CD4-positive, alpha-beta T cell (primary cell): ENCODE measurements at regions of chr6 and their contacts with region 1.

Region 1: DNA sequence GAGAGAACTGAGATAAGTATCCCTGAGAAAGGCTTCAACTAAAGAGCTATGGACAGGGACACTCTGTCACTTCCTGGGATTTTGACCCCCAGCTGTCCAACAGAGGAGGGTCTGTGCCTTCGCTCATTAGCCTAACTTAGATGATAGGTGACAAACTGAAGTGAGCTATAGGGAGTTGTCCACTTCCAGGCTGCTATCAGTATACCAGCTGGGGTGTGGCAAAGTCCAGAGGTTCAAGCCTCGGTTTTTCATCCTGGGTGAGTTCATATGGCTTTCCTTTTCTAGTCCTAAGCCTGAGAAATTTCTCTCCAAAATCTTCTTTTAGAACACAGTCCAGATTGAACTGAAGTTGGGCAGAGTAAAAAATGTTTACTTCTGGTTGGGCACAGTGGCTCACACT is 5.9 kb upstream of the PAQR8 start:
- DNase-seq: no peak
- ATAC-seq: no peak
- H3K4me3 ChIP-seq: no peak overlapping the region
- H3K4me3 Mint-ChIP-seq: no peak overlapping the region
- H3K27ac ChIP-seq: no peak overlapping the region
- H3K27ac Mint-ChIP-seq: no peak overlapping the region
- H3K4me1 ChIP-seq: peaks cover 7% of the 10 kb centered on the region
- H3K4me1 Mint-ChIP-seq: peaks cover 18% of the 10 kb centered on the region
- H3K27me3 ChIP-seq: no peaks in the 10 kb centered on the region
- H3K27me3 Mint-ChIP-seq: no peaks in the 10 kb centered on the region
- CTCF ChIP-seq: no peak

Region 2: GRCh38 chr6:52108128-52108527 is 247.9 kb before region 1 on chr6:
- CTCF ChIA-PET with region 1: no interaction called
- POLR2A ChIA-PET with region 1: no interaction called
- intact Hi-C with region 1: no loop called
- DNase-seq: no peak
- ATAC-seq: no peak
- H3K4me3 ChIP-seq: no peak overlapping the region
- H3K4me3 Mint-ChIP-seq: no peak overlapping the region
- H3K27ac ChIP-seq: no peak overlapping the region
- H3K27ac Mint-ChIP-seq: no peak overlapping the region
- H3K4me1 ChIP-seq: no peaks in the 10 kb centered on the region
- H3K4me1 Mint-ChIP-seq: no peaks in the 10 kb centered on the region
- H3K27me3 ChIP-seq: peaks cover 0 to 6% of the 10 kb centered on the region in 2 experiments
- H3K27me3 Mint-ChIP-seq: peaks cover 25% of the 10 kb centered on the region
- CTCF ChIP-seq: no peak

Region 3: DNA sequence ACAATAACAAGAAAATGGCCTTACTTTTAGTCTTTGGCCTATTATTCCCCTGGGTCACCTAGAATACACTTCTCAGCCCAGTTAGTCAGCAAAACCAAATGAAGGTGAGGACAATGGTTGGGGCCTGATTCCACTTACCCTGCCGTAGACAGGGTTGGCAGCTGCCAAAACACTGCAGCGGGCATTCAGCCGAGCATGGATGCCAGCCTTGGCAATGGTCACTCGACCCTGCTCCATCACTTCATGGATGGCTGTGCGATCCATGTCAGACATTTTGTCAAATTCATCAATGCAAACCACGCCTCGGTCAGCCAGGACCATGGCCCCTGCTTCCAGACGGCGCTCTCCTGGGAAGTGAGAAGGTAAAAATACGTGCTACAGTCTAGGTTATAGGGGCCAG is 79.9 kb before region 1 on chr6:
- CTCF ChIA-PET with region 1: no interaction called
- POLR2A ChIA-PET with region 1: no interaction called
- intact Hi-C with region 1: no loop called
- DNase-seq: no peak
- ATAC-seq: no peak
- H3K4me3 ChIP-seq: no peak overlapping the region
- H3K4me3 Mint-ChIP-seq: no peak overlapping the region
- H3K27ac ChIP-seq: no peak overlapping the region
- H3K27ac Mint-ChIP-seq: peak overlapping the region; percentile 76
- H3K4me1 ChIP-seq: peaks cover 4% of the 10 kb centered on the region
- H3K4me1 Mint-ChIP-seq: peaks cover 37% of the 10 kb centered on the region
- H3K27me3 ChIP-seq: no peaks in the 10 kb centered on the region
- H3K27me3 Mint-ChIP-seq: no peaks in the 10 kb centered on the region
- CTCF ChIP-seq: no peak

Region 4: DNA sequence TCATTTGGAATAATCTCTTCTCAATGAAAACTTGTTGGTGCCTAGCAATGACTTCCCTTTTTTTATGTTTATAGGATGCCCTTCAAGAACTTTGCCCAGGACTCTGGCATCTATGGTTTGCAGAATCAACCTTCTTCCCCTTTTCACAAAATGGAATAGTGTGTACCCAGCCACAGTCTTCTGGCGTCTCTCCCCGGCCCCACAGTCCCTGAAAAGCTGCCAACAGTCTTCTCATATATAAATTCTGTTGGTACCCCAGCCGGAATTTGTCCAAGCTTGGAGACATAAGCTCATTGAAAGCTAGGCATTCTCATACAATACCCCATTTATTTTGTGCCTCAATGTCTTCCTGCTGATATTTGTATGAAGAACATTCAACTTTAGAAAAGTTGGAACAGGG is 45.1 kb before region 1 on chr6:
- CTCF ChIA-PET with region 1: interaction called, 3 read pairs
- POLR2A ChIA-PET with region 1: interaction called, 38 read pairs
- intact Hi-C with region 1: loop called (anchors 5 kb)
- DNase-seq: no peak
- ATAC-seq: no peak
- H3K4me3 ChIP-seq: no peak overlapping the region
- H3K4me3 Mint-ChIP-seq: no peak overlapping the region
- H3K27ac ChIP-seq: no peak overlapping the region
- H3K27ac Mint-ChIP-seq: no peak overlapping the region
- H3K4me1 ChIP-seq: peaks cover 48% of the 10 kb centered on the region
- H3K4me1 Mint-ChIP-seq: peaks cover 63% of the 10 kb centered on the region
- H3K27me3 ChIP-seq: no peaks in the 10 kb centered on the region
- H3K27me3 Mint-ChIP-seq: no peaks in the 10 kb centered on the region
- CTCF ChIP-seq: no peak

Region 5: GRCh38 chr6:52610745-52611355 is 254.8 kb after region 1 on chr6:
- CTCF ChIA-PET with region 1: no interaction called
- POLR2A ChIA-PET with region 1: no interaction called
- intact Hi-C with region 1: no loop called
- DNase-seq: no peak
- ATAC-seq: no peak
- H3K4me3 ChIP-seq: no peak overlapping the region
- H3K4me3 Mint-ChIP-seq: no peak overlapping the region
- H3K27ac ChIP-seq: no peak overlapping the region
- H3K27ac Mint-ChIP-seq: no peak overlapping the region
- H3K4me1 ChIP-seq: no peaks in the 10 kb centered on the region
- H3K4me1 Mint-ChIP-seq: no peaks in the 10 kb centered on the region
- H3K27me3 ChIP-seq: no peaks in the 10 kb centered on the region
- H3K27me3 Mint-ChIP-seq: peaks cover 5% of the 10 kb centered on the region
- CTCF ChIP-seq: no peak